IMR-90 (cell line): ENCODE measurements at regions of chrX and their contacts with region 1.

Region 1: GRCh38 chrX:85611926-85612325 is 232.5 kb upstream of the POF1B start:
- DNase-seq: peak; percentile 22
- ATAC-seq: no peak
- H3K4me3 ChIP-seq: no peak overlapping the region
- H3K27ac ChIP-seq: no peak overlapping the region
- H3K4me1 ChIP-seq: no peaks in the 10 kb centered on the region
- H3K27me3 ChIP-seq: no peaks in the 10 kb centered on the region
- CTCF ChIP-seq: peak; percentile 53
- POLR2A ChIP-seq: no peak
- RAD21 ChIP-seq: peak; percentile 44

Region 2: GRCh38 chrX:85544609-85545008 is 67.3 kb before region 1 on chrX:
- CTCF ChIA-PET with region 1: no interaction called
- POLR2A ChIA-PET with region 1: no interaction called
- dilution Hi-C with region 1: no loop called
- in situ Hi-C with region 1: no loop called
- intact Hi-C with region 1: no loop called
- DNase-seq: no peak
- ATAC-seq: no peak
- H3K4me3 ChIP-seq: no peak overlapping the region
- H3K27ac ChIP-seq: no peak overlapping the region
- H3K4me1 ChIP-seq: no peaks in the 10 kb centered on the region
- H3K27me3 ChIP-seq: no peaks in the 10 kb centered on the region
- CTCF ChIP-seq: peak; percentile 48
- POLR2A ChIP-seq: no peak
- RAD21 ChIP-seq: peak; percentile 33; the same call in 1 of the 2 replicates

Region 3: GRCh38 chrX:86171366-86171765 is 559.4 kb after region 1 on chrX:
- CTCF ChIA-PET with region 1: no interaction called
- POLR2A ChIA-PET with region 1: no interaction called
- dilution Hi-C with region 1: no loop called
- in situ Hi-C with region 1: loop called (anchors 25 kb)
- intact Hi-C with region 1: loop called (anchors 5 kb)
- DNase-seq: peak; percentile 64
- ATAC-seq: peak; percentile 72
- H3K4me3 ChIP-seq: no peak overlapping the region
- H3K27ac ChIP-seq: no peak overlapping the region
- H3K4me1 ChIP-seq: no peaks in the 10 kb centered on the region
- H3K27me3 ChIP-seq: no peaks in the 10 kb centered on the region
- CTCF ChIP-seq: peak; percentile 58
- POLR2A ChIP-seq: no peak
- RAD21 ChIP-seq: peak; percentile 66

Region 4: GRCh38 chrX:86192827-86193226 is 580.9 kb after region 1 on chrX:
- CTCF ChIA-PET with region 1: no interaction called
- POLR2A ChIA-PET with region 1: no interaction called
- dilution Hi-C with region 1: no loop called
- in situ Hi-C with region 1: loop called (anchors 25 kb)
- intact Hi-C with region 1: loop called (anchors 2 kb)
- DNase-seq: no peak
- ATAC-seq: no peak
- H3K4me3 ChIP-seq: no peak overlapping the region
- H3K27ac ChIP-seq: no peak overlapping the region
- H3K4me1 ChIP-seq: no peaks in the 10 kb centered on the region
- H3K27me3 ChIP-seq: no peaks in the 10 kb centered on the region
- CTCF ChIP-seq: peak; percentile 22; the same call in 1 of the 2 replicates
- POLR2A ChIP-seq: no peak
- RAD21 ChIP-seq: no peak

Region 5: DNA sequence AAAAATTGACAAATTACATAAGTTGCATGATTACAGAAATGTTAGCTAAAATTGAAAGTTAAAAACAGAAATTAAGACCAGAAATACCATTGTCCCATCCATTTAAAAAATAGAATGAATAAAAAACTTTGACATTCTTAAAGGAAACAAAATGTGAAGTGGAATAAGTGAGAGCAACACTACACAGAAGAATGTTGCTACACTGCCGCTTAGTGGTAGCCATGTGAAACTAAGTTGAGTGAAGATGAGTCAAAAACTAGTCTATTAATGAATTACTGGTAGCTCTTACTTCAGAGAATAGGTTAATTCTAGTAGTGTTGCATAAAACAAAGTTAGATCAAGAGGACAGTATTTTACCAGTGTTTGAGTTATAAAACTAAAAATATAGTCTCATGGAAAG is 1334.6 kb after region 1 on chrX:
- CTCF ChIA-PET with region 1: no interaction called
- POLR2A ChIA-PET with region 1: no interaction called
- dilution Hi-C with region 1: no loop called
- in situ Hi-C with region 1: no loop called
- intact Hi-C with region 1: loop called (anchors 10 kb)
- DNase-seq: peak; percentile 24
- ATAC-seq: peak; percentile 73
- H3K4me3 ChIP-seq: no peak overlapping the region
- H3K27ac ChIP-seq: no peak overlapping the region
- H3K4me1 ChIP-seq: no peaks in the 10 kb centered on the region
- H3K27me3 ChIP-seq: no peaks in the 10 kb centered on the region
- CTCF ChIP-seq: peak; percentile 59
- POLR2A ChIP-seq: no peak
- RAD21 ChIP-seq: peak; percentile 53

Region 6: GRCh38 chrX:87299563-87300160 is 1687.7 kb after region 1 on chrX:
- CTCF ChIA-PET with region 1: no interaction called
- POLR2A ChIA-PET with region 1: no interaction called
- dilution Hi-C with region 1: no loop called
- in situ Hi-C with region 1: no loop called
- intact Hi-C with region 1: loop called (anchors 2 kb)
- DNase-seq: peak; percentile 8
- ATAC-seq: no peak
- H3K4me3 ChIP-seq: no peak overlapping the region
- H3K27ac ChIP-seq: no peak overlapping the region
- H3K4me1 ChIP-seq: no peaks in the 10 kb centered on the region
- H3K27me3 ChIP-seq: no peaks in the 10 kb centered on the region
- CTCF ChIP-seq: peak; percentile 61
- POLR2A ChIP-seq: no peak
- RAD21 ChIP-seq: peak; percentile 31; the same call in 1 of the 2 replicates